A549 (cell line): ENCODE measurements at regions of chr20 and their contacts with region 1.

Region 1: DNA sequence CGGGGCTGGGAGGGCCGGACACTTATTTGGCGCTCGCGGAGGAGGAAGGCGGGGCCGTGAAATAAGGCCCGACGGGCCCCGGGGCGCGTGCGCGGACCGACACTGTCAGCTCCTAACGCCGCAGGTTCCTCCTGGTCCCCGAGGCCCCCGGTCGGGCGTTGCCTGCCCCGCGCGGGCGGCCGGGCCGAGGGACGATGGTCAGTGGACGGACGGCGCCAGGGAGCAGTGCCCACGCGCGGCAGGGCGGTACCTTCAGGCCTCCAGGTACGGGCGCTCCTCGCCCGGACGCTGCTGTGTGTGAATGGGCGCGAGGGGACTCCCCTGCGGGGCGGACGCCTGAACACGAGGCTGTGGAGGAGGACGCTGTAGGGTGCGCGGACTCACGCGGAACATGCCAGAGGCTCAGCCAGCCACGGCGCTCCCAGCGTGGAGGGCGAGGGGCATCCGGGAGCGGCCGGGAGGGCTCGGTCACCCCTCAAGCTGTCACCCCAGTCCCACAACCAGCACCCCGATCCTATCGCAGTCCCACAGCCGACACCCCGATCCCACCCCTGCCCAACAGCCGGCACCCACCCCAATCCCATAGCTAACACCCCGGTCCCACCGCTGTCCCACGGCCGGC is 339 bp upstream of the GMEB2 start:
- DNase-seq: peak; percentile 94 to 97
- ATAC-seq: peak; percentile 79 to 86
- H3K4me3 ChIP-seq: peak overlapping the region; percentile 97
- H3K27ac ChIP-seq: peak overlapping the region; percentile 97 to 100
- H3K4me1 ChIP-seq: peaks cover 9% of the 10 kb centered on the region
- CTCF ChIP-seq: no peak
- EP300 ChIP-seq: no peak
- POLR2A ChIP-seq: peak; percentile 73
- RAD21 ChIP-seq: no peak

Region 2: DNA sequence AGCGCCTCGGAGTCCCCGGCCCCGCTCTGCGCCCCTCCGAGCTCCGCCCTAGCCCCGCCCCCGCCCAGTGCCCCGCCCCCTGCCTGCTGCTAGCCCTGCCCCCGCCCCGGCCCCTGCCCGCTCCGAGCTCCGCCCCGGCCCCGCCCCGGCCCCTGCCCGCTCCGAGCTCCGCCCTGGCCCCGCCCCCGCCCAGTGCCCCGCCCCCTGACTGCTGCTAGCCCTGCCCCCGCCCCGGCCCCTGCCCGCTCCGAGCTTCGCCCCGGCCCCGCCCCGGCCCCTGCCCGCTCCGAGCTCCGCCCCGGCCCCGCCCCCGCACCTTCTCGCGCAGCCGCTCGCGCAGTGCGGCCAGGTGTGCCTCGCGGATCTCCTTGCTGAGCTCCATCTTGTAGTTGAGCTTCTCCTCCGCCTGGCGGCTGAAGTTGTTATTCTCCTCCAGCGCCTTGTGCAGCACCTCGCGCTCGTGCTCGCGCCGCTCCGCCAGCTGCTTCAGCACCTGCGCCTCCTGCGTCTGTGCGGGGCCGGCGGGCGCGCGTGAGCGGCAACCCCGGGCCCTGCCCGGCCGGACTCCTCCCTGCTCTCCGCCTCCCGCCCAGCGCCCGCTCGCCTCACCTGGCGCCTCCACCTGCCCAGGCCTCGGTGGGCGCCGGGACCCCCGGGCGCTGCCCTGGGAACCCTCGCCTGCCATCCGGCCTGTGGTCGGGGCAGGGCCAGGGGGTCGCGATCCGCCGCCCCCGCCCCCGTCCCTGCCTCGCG is 14.7 kb after region 1 on chr20:
- CTCF ChIA-PET with region 1: interaction called, 5 read pairs
- POLR2A ChIA-PET with region 1: interaction called, 18 read pairs
- DNase-seq: peak; percentile 74 to 89
- ATAC-seq: peak; percentile 80 to 83
- H3K4me3 ChIP-seq: peak overlapping the region; percentile 54
- H3K27ac ChIP-seq: peak overlapping the region; percentile 43 to 80
- H3K4me1 ChIP-seq: peaks cover 9% of the 10 kb centered on the region; the same call in 2 of the 3 replicates
- CTCF ChIP-seq: no peak
- EP300 ChIP-seq: no peak
- POLR2A ChIP-seq: 0 out of 2 replicates have a peak, but pooled peaks have one; percentile 26
- RAD21 ChIP-seq: no peak